Activated B cell treated with CpG ODN at 0.5 μM for 24 hours (primary cell): ENCODE measurements at regions of chr11 and their contacts with region 1.

Region 1: GRCh38 chr11:74754507-74755255 is 6.0 kb downstream of the RNF169 start:
- DNase-seq: no peak
- ATAC-seq: no peak
- H3K4me3 Mint-ChIP-seq: no peak overlapping the region
- H3K27ac Mint-ChIP-seq: no peak overlapping the region
- H3K4me1 Mint-ChIP-seq: peaks cover 37% of the 10 kb centered on the region
- H3K27me3 Mint-ChIP-seq: no peaks in the 10 kb centered on the region
- CTCF ChIP-seq: no peak

Region 2: GRCh38 chr11:74739546-74740270 is 15.0 kb before region 1 on chr11:
- CTCF ChIA-PET with region 1: interaction called, 11 read pairs
- POLR2A ChIA-PET with region 1: no interaction called
- intact Hi-C with region 1: no loop called
- DNase-seq: no peak
- ATAC-seq: peak; percentile 77
- H3K4me3 Mint-ChIP-seq: no peak overlapping the region
- H3K27ac Mint-ChIP-seq: no peak overlapping the region
- H3K4me1 Mint-ChIP-seq: peaks cover 5% of the 10 kb centered on the region
- H3K27me3 Mint-ChIP-seq: peaks cover 31% of the 10 kb centered on the region
- CTCF ChIP-seq: peak; percentile 91